Gastrocnemius medialis (tissue), 4 donors: ENCODE measurements at regions of chr11 and their contacts with region 1.

Region 1: GRCh38 chr11:13335319-13335718 is 57.7 kb downstream of the BMAL1 start:
- DNase-seq: peak; percentile 23 to 59
- ATAC-seq: peak in 1 of 2 donors; percentile 35
- H3K4me3 ChIP-seq: no peak overlapping the region
- H3K27ac ChIP-seq: peak overlapping the region; percentile 1 to 68 (median 62)
- H3K4me1 ChIP-seq: peaks cover 97 to 100% of the 10 kb centered on the region in 2 donors
- H3K27me3 ChIP-seq: no peaks in the 10 kb centered on the region
- CTCF ChIP-seq: peak; percentile 50 to 82 (median 73)
- POLR2A ChIP-seq: no peak

Region 2: DNA sequence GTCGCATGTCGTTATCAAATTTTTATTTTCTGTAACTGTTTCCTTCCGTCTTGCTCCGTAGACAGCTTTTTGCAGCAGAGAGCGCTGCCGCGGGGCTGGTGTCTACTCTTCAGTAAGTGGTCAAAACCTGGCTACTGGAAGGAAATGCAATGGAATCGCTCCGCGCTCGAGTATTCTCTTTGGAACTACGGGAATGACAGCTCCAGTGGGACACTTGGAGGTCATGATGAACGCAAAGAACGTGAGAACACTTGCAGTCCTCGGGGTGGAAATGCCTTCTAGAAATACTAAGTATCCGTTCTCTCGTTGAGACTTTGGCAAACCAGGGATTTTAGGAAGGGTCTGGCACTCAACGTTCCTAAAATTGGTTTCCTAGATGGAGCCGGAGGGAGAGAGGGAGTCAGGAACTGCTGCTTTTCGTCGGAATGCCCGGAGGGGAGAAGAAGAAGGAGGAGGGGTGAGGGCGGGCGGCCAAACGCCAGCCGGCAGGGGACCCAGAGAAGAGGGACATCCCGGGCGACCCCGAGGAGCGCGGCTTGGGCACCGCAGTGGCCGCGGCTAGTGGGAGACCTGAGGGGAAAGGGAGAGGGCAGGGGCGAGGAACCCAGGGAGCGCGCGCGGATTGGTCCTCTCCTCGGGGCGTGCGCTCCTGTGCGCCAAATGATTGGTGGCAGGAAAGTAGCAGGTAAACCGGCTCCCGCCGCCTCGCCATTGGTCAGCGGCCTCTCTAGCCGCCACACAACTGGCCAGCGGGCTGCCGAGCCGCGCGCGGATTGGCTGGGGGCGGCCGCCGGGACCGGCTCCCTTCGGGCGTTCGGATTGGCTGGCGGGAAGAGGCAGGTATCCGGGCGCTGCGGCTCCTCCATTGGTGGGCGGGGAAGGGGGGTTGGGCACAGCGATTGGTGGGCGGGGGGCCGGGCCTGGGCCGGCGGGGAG is 58.2 kb before region 1 on chr11:
- in situ Hi-C with region 1: loop called in 2 of 4 experiments (anchors 10 kb)
- intact Hi-C with region 1: loop called (anchors 1 kb)
- DNase-seq: peak; percentile 99
- ATAC-seq: peak; percentile 80 to 82
- H3K4me3 ChIP-seq: peak overlapping the region; percentile 84 to 97 (median 94)
- H3K27ac ChIP-seq: peak overlapping the region; percentile 86 to 98 (median 96)
- H3K4me1 ChIP-seq: peaks cover 26 to 39% of the 10 kb centered on the region in 2 donors
- H3K27me3 ChIP-seq: no peaks in the 10 kb centered on the region
- CTCF ChIP-seq: peak in 1 of 5 experiments; percentile 37
- POLR2A ChIP-seq: peak; percentile 62 to 92

Region 3: DNA sequence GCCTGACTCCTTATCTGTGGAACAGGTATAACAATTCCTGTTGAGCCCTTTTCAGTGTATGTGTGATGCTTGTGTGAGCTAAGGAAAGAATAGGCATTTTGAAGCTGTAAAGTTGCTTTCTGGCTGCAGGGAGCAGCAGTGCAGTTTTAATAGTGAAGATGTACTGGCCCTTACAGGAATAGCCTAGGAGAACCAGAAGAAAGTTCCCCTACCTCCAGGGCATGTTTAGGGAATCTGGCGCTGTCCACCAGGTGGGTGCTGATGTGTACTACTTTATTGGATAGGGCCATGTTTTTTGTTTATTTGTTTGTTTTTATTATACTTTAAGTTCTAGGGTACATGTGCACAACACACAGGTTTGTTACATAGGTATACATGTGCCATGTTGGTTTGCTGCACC is 46.2 kb before region 1 on chr11:
- in situ Hi-C with region 1: loop called in 1 of 4 experiments (anchors 10 kb)
- intact Hi-C with region 1: no loop called
- DNase-seq: no peak
- ATAC-seq: no peak
- H3K4me3 ChIP-seq: no peak overlapping the region
- H3K27ac ChIP-seq: peak overlapping the region in 1 of 4 donors; percentile 82
- H3K4me1 ChIP-seq: peaks cover 57 to 85% of the 10 kb centered on the region in 2 donors
- H3K27me3 ChIP-seq: no peaks in the 10 kb centered on the region
- CTCF ChIP-seq: no peak
- POLR2A ChIP-seq: no peak

Region 4: DNA sequence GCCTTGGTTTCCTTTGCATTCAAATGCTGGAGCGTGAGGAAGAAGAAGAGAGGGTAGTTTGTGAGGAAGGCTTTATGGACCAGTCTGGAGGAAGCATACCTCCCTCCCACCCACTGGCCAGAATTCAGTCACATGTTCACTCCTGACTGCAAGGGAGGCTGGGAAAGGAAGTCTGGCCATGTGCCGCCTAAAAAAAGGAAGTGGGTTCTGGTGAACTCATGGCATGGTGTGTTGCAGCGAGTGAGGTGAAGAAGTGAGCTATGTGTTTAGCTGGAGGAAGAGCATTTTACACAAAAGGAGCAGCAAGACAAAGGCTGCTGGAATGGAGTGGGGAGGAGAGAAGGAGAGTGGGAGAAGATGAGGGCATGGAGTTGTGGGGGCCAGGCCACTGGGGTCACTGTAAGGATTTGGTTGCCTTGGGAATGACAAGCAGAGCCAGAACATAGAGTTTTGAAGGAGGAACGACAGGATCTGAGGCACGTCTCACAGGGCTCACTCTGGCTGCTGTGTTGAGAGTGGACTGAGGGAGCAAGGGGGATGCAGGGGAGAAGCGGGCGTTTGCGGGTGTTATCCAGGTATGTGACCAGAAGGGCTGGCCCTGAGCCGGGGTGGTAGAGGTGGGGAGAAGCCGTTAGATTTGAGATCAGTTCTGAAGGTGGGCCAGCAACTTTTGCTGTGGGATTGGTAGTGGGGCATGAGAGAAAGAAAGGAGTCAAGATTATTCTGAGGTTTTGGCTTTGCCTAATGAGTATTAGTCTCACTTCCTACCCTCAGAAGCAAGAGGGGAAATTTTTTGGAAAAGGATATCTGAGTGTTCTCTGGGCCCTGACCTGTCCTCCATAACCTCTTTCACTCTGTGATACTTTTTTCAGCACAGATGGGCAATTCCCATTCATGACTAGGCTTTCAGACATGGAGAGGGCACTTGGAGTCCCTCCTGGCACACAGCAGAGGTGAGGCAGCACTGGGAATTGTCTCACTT is 31.4 kb before region 1 on chr11:
- in situ Hi-C with region 1: no loop called
- intact Hi-C with region 1: loop called (anchors 2 kb)
- DNase-seq: no peak
- ATAC-seq: peak in 1 of 2 donors; percentile 6
- H3K4me3 ChIP-seq: peak overlapping the region in 2 of 4 donors; percentile 34 to 42
- H3K27ac ChIP-seq: peak overlapping the region; percentile 84 to 92 (median 91)
- H3K4me1 ChIP-seq: peaks cover 95% of the 10 kb centered on the region in 2 donors
- H3K27me3 ChIP-seq: no peaks in the 10 kb centered on the region
- CTCF ChIP-seq: no peak
- POLR2A ChIP-seq: no peak